A673 (cell line): ENCODE measurements at regions of chr15 and their contacts with region 1.

Region 1: DNA sequence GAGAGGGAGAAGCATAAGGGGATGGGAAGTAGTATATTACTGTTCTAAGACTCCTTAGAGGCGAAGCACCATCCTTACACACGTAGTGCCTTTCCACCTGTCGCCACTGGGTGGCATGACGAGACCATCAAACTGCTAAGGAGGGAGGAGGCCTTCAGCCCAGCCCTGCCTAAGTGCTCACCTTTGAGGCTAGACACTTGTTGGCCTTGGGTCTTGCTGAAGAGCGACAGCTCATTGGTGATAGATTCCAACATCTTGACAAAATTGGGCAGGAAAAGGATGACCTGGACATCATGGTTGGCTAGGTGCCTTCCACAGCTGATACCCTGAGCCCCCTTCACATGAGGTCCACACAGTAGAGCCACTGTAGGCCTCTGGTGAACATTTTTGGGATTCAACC is 19.6 kb downstream of the CLK3 start:
- DNase-seq: peak; percentile 78
- H3K4me3 ChIP-seq: no peak overlapping the region
- H3K27ac ChIP-seq: no peak overlapping the region
- H3K4me1 ChIP-seq: no peaks in the 10 kb centered on the region
- H3K27me3 ChIP-seq: no peaks in the 10 kb centered on the region
- CTCF ChIP-seq: peak; percentile 92

Region 2: GRCh38 chr15:74621940-74622339 is 13.3 kb before region 1 on chr15:
- CTCF ChIA-PET with region 1: interaction called, 10 read pairs
- POLR2A ChIA-PET with region 1: no interaction called
- intact Hi-C with region 1: no loop called
- DNase-seq: no peak
- H3K4me3 ChIP-seq: no peak overlapping the region
- H3K27ac ChIP-seq: no peak overlapping the region
- H3K4me1 ChIP-seq: peaks cover 4% of the 10 kb centered on the region
- H3K27me3 ChIP-seq: no peaks in the 10 kb centered on the region
- CTCF ChIP-seq: no peak

Region 3: DNA sequence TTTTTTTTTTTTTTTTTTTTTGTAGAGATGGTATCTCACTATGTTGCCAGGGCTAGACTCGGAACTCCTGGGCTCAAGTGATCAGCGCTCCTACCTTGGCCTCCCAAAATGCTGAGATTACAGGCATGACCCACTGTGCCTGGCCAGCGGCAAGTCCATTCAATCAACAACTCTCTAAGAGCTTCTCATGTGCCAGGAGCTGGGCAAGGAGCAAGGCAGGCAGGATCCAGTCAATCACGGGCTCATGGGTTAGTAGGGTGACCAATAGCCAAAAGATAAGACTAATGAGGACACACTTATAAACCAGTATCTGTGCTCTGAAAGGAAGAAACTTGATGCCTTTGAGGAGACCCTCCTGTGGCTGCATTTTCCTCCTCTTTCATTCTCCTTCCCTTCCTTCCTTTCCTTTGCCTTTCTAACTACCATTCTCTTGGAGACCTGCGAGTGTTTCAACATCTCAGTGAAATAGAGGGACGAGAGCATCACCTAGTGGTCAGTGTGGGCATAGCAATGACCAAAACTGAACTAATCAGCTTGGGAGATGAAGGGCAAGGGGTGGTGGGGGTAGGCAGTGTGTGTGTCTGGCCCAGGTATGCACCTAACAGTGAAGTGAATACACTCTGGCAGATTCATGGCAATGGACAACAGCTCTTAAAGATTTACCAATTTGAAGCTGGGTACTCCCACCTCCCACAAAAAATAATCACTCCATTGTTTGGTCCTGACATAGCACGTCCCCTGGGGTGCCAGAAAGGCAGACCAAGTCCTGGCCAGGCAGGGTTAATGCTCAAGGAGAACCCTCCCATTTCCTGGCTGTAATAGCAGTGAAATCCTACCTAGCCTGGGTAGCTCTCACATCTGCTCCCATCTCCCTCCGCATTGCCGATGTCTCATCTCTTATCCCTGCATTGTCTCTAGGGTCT is 315.1 kb after region 1 on chr15:
- CTCF ChIA-PET with region 1: no interaction called
- POLR2A ChIA-PET with region 1: no interaction called
- intact Hi-C with region 1: loop called (anchors 5 kb)
- DNase-seq: peak; percentile 86
- H3K4me3 ChIP-seq: no peak overlapping the region
- H3K27ac ChIP-seq: no peak overlapping the region
- H3K4me1 ChIP-seq: peaks cover 17% of the 10 kb centered on the region
- H3K27me3 ChIP-seq: no peaks in the 10 kb centered on the region
- CTCF ChIP-seq: peak; percentile 99

Region 4: GRCh38 chr15:75420698-75421097 is 785.5 kb after region 1 on chr15:
- CTCF ChIA-PET with region 1: no interaction called
- POLR2A ChIA-PET with region 1: no interaction called
- intact Hi-C with region 1: no loop called
- DNase-seq: no peak
- H3K4me3 ChIP-seq: no peak overlapping the region
- H3K27ac ChIP-seq: no peak overlapping the region
- H3K4me1 ChIP-seq: peaks cover 1% of the 10 kb centered on the region
- H3K27me3 ChIP-seq: no peaks in the 10 kb centered on the region
- CTCF ChIP-seq: no peak